ENCODE measurements at regions of chrX and their contacts with region 1.

Region 1: GRCh38 chrX:155026726-155027508 is at the start of gene FUNDC2:
- DNase-seq: peak; percentile 57 to 98
- H3K4me3 ChIP-seq: peak within 1 kb of the TSS; percentile 94
- H3K27ac ChIP-seq: peak within 1 kb of the TSS; percentile 96
- H3K4me1 ChIP-seq: peaks cover 13% of the 10 kb centered on the region
- H3K27me3 ChIP-seq: no peaks in the 10 kb centered on the region
- CTCF ChIP-seq: no peak
- total RNA-seq, gene FUNDC2: 90.6 and 108 TPM in 2 replicates

Region 2: GRCh38 chrX:154490414-154491083 is 536.4 kb before region 1 on chrX and contains the start of gene SLC10A3:
- CTCF ChIA-PET with region 1: no interaction called
- POLR2A ChIA-PET with region 1: interaction called, 14 read pairs
- intact Hi-C with region 1: no loop called
- DNase-seq: peak; percentile 87 to 97
- H3K4me3 ChIP-seq: peak within 1 kb of the TSS; percentile 66
- H3K27ac ChIP-seq: peak within 1 kb of the TSS; percentile 68
- H3K4me1 ChIP-seq: peaks cover 14% of the 10 kb centered on the region; the same call in 1 of the 2 replicates
- H3K27me3 ChIP-seq: no peaks in the 10 kb centered on the region
- CTCF ChIP-seq: no peak
- total RNA-seq, gene SLC10A3: 38.3 and 54.9 TPM in 2 replicates

Region 3: DNA sequence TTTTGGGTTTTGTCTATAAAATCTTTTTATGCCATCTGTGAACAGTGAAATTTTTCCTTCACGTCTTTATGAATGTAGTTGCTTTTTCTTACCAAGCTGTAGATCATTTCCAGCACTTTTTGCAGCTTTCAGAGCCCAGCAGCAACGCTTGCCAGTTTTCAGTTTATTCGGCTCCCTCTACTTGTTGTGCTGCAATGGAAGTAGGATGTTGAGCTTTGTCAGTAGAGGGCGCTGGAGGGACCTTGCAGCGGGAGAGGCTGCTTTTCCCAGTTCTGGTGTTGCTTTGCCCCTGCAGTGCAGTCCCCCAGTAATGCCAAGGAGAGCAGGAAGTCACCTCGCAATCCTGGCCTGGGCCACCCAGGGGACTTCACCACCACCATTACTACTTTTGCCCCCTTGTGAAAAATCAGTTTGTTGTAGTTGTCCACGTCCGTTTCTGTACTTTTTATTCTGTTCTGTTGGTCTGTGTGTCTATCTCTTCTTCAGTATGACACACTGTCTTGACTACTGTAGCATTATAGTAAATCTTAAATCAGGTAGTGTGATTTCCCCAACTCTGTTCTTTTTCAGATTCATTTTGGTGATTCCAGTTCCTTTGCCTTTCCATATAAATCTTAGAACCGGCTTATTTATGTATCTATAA is 22.2 kb after region 1 on chrX:
- CTCF ChIA-PET with region 1: interaction called, 13 read pairs
- POLR2A ChIA-PET with region 1: interaction called, 7 read pairs
- intact Hi-C with region 1: no loop called
- DNase-seq: peak; percentile 21 to 37
- H3K4me3 ChIP-seq: no peak overlapping the region
- H3K27ac ChIP-seq: no peak overlapping the region
- H3K4me1 ChIP-seq: no peaks in the 10 kb centered on the region
- H3K27me3 ChIP-seq: no peaks in the 10 kb centered on the region
- CTCF ChIP-seq: peak; percentile 58

Region 4: GRCh38 chrX:155070975-155071693 is 44.2 kb after region 1 on chrX and contains the starts of genes BRCC3, CMC4 and MTCP1:
- CTCF ChIA-PET with region 1: no interaction called
- POLR2A ChIA-PET with region 1: interaction called, 19 read pairs
- intact Hi-C with region 1: loop called (anchors 2 kb)
- DNase-seq: peak; percentile 62 to 92
- H3K4me3 ChIP-seq: peak within 1 kb of the TSS; percentile 83
- H3K27ac ChIP-seq: peak within 1 kb of the TSS; percentile 67
- H3K4me1 ChIP-seq: peaks cover 35% of the 10 kb centered on the region
- H3K27me3 ChIP-seq: no peaks in the 10 kb centered on the region
- CTCF ChIP-seq: no peak
- total RNA-seq, gene BRCC3: 40.2 and 52.0 TPM in 2 replicates
- total RNA-seq, gene CMC4: 13.7 and 15.8 TPM in 2 replicates
- total RNA-seq, gene MTCP1: 30.8 and 49.5 TPM in 2 replicates

Region 5: GRCh38 chrX:155127940-155128339 is 101.0 kb after region 1 on chrX:
- CTCF ChIA-PET with region 1: no interaction called
- POLR2A ChIA-PET with region 1: interaction called, 19 read pairs
- intact Hi-C with region 1: no loop called
- DNase-seq: no peak
- H3K4me3 ChIP-seq: no peak overlapping the region
- H3K27ac ChIP-seq: no peak overlapping the region
- H3K4me1 ChIP-seq: no peaks in the 10 kb centered on the region
- H3K27me3 ChIP-seq: no peaks in the 10 kb centered on the region
- CTCF ChIP-seq: no peak

Region 6: DNA sequence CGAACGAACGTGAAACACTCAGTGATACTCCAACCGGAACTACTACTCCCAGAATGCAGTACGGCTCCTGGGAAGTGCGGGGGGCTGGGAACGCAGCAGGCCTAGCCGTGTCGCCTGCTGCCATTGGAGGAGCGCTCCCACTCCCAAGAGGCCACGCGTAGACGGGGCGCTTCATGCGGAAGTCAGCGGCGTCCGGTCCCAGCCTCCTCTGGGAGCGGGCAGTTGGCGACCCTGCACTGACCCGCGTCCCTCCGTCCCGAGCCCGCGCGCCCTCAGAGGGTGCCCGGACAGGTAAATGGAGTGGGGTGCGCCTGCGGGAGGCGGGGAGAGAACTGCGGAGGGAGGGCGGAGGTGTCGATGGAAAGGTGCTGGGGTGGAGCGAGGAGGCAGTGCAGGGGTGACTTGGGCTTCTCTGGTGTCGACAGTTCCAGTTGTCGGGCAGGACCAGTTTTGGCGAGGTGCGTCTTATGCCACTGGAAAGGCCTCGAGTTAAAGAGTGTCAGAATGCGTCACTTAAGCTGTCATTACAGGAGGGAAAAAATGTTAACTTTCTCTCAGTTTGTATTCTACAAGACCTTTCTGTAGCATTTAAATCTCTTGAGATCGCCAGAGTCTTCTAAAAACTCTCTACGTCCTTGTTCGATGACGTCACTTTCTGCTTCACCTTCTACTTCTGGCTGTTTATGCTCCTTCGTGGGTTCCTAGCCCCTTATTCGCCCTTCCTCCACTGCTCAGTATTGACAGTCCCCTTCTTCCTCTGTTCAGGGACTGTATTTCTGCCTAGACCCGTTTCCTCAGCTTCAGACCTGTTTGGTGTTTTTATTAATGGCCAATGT is 854.5 kb after region 1 on chrX and contains the start of gene VAMP7:
- CTCF ChIA-PET with region 1: no interaction called
- POLR2A ChIA-PET with region 1: no interaction called
- intact Hi-C with region 1: loop called (anchors 2 kb)
- DNase-seq: peak; percentile 86 to 92
- H3K4me3 ChIP-seq: peak within 1 kb of the TSS; percentile 96
- H3K27ac ChIP-seq: peak within 1 kb of the TSS; percentile 60
- H3K4me1 ChIP-seq: 0 out of 2 replicates have a peak, but pooled peaks cover 6% of the 10 kb centered on the region
- H3K27me3 ChIP-seq: no peaks in the 10 kb centered on the region
- CTCF ChIP-seq: no peak
- total RNA-seq, gene VAMP7: 60.2 and 77.7 TPM in 2 replicates

Measured in PC-9 (cell line).